CD4-positive, alpha-beta memory T cell (primary cell): ENCODE measurements at regions of chr15 and their contacts with region 1.

Region 1: DNA sequence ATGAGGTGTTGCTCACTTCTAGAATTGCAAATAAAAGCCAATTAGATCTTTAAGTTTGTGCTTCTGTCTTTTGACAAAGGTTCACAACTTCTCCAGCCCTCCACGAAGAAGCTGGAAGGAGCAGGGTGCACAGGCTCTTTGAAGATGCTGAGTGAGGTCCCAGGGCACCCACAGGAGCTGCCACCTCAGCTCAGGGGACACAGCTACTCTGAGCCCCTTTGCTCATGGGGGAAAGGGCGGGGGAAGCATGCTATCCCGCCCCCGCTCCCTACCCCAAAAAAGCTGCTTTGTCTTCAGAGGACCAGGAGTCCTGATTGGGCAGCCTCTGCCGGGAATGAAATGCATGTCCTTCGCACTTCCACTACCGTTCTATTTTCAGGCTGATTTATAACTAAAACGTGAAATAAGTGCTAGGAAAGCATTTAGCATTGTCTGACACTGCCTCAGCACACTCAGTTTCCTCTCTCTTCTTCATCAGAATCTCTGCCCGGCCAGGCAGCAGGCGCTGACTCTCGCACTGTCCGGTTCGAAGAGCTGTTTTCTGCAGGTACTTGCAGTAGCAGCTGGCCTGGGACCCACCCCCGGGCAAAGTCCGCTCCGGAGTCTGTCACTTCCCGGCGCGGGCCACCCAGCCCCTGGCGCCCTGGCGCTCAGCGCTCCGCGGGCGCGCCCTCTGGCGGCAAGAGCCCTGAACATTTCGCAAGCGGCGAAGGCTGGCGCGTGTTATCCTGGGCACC is 45.5 kb upstream of the KLHL25 start:
- DNase-seq: peak; percentile 65 to 80 (median 70)
- H3K4me3 ChIP-seq: no peak overlapping the region
- H3K4me3 Mint-ChIP-seq: peak overlapping the region; percentile 31 to 84 (median 67)
- H3K27ac ChIP-seq: no peak overlapping the region
- H3K27ac Mint-ChIP-seq: peak overlapping the region in 2 of 7 donors; percentile 10 to 12
- H3K4me1 ChIP-seq: peaks cover 10% of the 10 kb centered on the region
- H3K4me1 Mint-ChIP-seq: peaks cover 0 to 6% (median 3%) of the 10 kb centered on the region in 4 donors
- H3K27me3 ChIP-seq: no peaks in the 10 kb centered on the region
- H3K27me3 Mint-ChIP-seq: peaks cover under 1 to 6% of the 10 kb centered on the region in 2 donors

Region 2: DNA sequence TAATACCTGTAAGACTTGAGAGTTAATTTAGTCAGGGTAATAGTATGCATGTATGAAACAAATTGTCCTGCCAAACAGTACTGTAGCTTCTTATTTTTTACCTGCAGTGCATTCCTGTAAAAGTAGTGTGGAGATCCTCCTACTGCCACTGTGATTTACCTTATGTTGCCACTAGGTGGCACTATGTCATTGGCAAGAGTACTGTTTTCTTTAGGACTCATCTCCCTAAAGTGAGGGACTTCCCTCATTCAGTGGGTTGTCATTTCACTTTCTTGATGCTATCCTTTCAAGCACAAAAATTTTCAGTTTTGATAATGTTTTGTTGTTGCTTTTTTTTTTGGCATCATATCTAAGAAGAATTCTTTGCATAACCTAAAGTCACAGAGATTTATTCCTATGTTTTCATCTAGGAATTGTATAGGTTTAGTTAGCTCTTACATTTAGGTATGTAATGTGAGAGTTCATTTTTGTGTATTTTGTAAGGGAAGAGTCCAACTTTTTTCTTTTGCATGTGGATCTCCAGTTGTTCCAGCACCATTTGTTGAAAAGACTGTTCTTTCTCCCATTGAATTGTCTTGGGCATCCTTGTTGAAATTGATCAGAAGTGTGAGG is 354.2 kb before region 1 on chr15:
- CTCF ChIA-PET with region 1: interaction called, 6 read pairs
- POLR2A ChIA-PET with region 1: no interaction called
- intact Hi-C with region 1: loop called (anchors 1 kb)
- DNase-seq: peak; percentile 65 to 73 (median 70)
- H3K4me3 ChIP-seq: no peak overlapping the region
- H3K4me3 Mint-ChIP-seq: peak overlapping the region in 1 of 8 donors; percentile 12
- H3K27ac ChIP-seq: no peak overlapping the region
- H3K27ac Mint-ChIP-seq: peak overlapping the region in 4 of 7 donors; percentile 1 to 63 (median 22)
- H3K4me1 ChIP-seq: peaks cover 41% of the 10 kb centered on the region
- H3K4me1 Mint-ChIP-seq: peaks cover 49 to 79% (median 65%) of the 10 kb centered on the region in 4 donors
- H3K27me3 ChIP-seq: no peaks in the 10 kb centered on the region
- H3K27me3 Mint-ChIP-seq: no peaks in the 10 kb centered on the region

Region 3: DNA sequence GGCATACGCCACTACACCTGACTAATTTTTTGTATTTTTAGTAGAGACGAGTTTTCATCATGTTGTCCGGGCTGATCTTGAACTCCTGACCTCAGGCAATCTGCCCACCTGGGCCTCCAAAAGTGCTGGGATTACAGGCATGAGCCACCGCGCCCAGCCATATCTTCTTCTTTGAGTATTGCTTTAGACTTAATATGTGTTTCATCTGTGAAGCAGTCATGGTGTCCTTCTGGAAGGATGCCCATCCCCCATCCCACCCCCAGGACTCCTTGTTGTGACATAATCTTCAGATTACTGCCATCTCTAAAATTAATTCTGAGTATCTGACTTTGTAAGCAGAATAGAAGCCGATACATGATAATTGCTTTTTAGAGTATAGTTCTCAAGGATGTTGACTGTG is 103.2 kb before region 1 on chr15:
- CTCF ChIA-PET with region 1: interaction called, 152 read pairs
- POLR2A ChIA-PET with region 1: interaction called, 3 read pairs
- intact Hi-C with region 1: no loop called
- DNase-seq: no peak
- H3K4me3 ChIP-seq: no peak overlapping the region
- H3K4me3 Mint-ChIP-seq: no peak overlapping the region
- H3K27ac ChIP-seq: no peak overlapping the region
- H3K27ac Mint-ChIP-seq: peak overlapping the region in 3 of 7 donors; percentile 12 to 56 (median 29)
- H3K4me1 ChIP-seq: no peaks in the 10 kb centered on the region
- H3K4me1 Mint-ChIP-seq: peaks cover 0 to 8% (median 3%) of the 10 kb centered on the region in 4 donors
- H3K27me3 ChIP-seq: no peaks in the 10 kb centered on the region
- H3K27me3 Mint-ChIP-seq: no peaks in the 10 kb centered on the region

Region 4: DNA sequence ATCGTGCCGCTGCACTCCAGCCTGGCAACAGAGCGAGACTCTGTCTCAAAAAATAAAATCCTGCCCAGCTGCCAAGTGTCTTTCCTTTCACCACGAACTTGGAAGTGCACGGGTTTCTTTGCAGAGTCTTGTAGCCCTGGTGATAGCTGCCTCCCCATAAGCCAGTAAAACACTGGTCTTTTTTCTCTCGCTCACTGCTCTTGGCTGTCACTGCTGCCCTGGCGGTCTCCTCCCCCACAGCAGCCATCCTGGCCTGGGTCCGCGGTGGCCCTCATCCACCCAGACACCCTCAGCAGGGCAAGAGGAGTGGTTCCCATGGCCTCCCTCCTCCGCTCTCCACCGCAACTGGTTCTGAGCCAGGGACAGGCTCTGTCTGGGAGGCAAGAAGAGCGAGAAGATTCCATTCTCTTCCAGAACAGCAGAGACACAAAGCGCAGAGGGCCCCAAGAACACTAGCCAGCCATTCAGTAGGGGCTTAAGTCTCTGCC is 89.9 kb before region 1 on chr15:
- CTCF ChIA-PET with region 1: interaction called, 4 read pairs
- POLR2A ChIA-PET with region 1: no interaction called
- intact Hi-C with region 1: loop called (anchors 5 kb)
- DNase-seq: no peak
- H3K4me3 ChIP-seq: no peak overlapping the region
- H3K4me3 Mint-ChIP-seq: peak overlapping the region in 1 of 8 donors; percentile 45
- H3K27ac ChIP-seq: no peak overlapping the region
- H3K27ac Mint-ChIP-seq: peak overlapping the region in 2 of 7 donors; percentile 70 to 73
- H3K4me1 ChIP-seq: peaks cover 18% of the 10 kb centered on the region
- H3K4me1 Mint-ChIP-seq: peaks cover 15 to 37% (median 20%) of the 10 kb centered on the region in 4 donors
- H3K27me3 ChIP-seq: no peaks in the 10 kb centered on the region
- H3K27me3 Mint-ChIP-seq: no peaks in the 10 kb centered on the region

Region 5: GRCh38 chr15:85858586-85859375 is 18.5 kb after region 1 on chr15:
- CTCF ChIA-PET with region 1: interaction called, 19 read pairs
- POLR2A ChIA-PET with region 1: no interaction called
- intact Hi-C with region 1: no loop called
- DNase-seq: peak; percentile 66 to 71 (median 69)
- H3K4me3 ChIP-seq: peak overlapping the region in 1 of 2 donors; percentile 19
- H3K4me3 Mint-ChIP-seq: peak overlapping the region in 7 of 8 donors; percentile 1 to 80 (median 60)
- H3K27ac ChIP-seq: no peak overlapping the region
- H3K27ac Mint-ChIP-seq: peak overlapping the region in 5 of 7 donors; percentile 15 to 82 (median 47)
- H3K4me1 ChIP-seq: no peaks in the 10 kb centered on the region
- H3K4me1 Mint-ChIP-seq: peaks cover 5 to 11% (median 8%) of the 10 kb centered on the region in 4 donors
- H3K27me3 ChIP-seq: peaks cover 5% of the 10 kb centered on the region
- H3K27me3 Mint-ChIP-seq: peaks cover 16 to 18% of the 10 kb centered on the region in 2 donors

Region 6: DNA sequence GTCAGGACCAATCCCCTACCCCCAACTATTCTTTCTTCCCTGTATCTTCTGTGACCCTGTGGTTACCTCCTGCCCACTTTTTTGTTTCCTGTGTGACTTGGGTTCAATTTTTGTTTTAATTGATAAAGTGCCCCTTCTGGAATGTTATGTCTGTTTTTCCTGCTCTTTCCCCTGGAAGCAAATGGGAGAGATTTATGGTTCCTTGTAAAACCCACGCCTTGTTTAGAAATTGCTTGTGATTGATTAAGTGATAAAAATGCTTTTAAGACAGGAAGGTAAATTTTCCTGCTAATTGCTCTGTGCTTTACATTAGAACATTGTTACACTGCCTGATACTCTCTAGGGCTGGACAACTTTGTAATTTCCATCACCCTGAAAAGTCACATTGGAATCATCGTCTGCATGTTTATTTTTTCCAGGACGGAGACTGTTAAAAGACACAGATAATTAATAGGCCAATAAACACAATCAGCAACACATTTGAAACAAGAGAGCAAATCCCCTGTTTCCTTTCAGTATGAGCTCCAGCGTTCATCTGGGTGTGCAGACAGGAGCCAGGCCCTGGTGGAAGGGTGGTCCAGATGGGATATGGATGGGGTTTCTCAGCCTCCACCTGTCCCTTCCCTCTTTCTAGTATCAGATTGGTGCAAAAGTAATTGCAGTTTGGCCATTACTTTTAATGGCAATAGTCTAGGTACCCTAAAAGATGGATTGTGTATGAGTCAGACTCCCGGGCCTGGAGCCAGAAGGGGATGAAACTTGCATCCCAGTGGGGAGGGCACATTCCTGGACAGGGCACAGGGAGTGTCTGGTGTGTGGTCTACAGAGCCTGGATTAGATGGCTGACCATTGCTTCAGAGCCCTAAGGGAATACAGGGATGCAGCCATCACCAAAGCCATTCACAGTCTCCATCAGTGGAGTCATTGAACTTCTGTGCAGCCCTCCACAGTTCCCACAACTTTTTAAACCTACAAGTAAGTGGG is 181.3 kb after region 1 on chr15:
- CTCF ChIA-PET with region 1: no interaction called
- POLR2A ChIA-PET with region 1: no interaction called
- intact Hi-C with region 1: no loop called
- DNase-seq: no peak
- H3K4me3 ChIP-seq: no peak overlapping the region
- H3K4me3 Mint-ChIP-seq: no peak overlapping the region
- H3K27ac ChIP-seq: no peak overlapping the region
- H3K27ac Mint-ChIP-seq: peak overlapping the region in 1 of 7 donors; percentile 15
- H3K4me1 ChIP-seq: no peaks in the 10 kb centered on the region
- H3K4me1 Mint-ChIP-seq: no peaks in the 10 kb centered on the region
- H3K27me3 ChIP-seq: no peaks in the 10 kb centered on the region
- H3K27me3 Mint-ChIP-seq: peaks cover 11 to 16% of the 10 kb centered on the region in 2 donors